WTC11 (cell line): ENCODE measurements at regions of chr6 and their contacts with region 1.

Region 1: DNA sequence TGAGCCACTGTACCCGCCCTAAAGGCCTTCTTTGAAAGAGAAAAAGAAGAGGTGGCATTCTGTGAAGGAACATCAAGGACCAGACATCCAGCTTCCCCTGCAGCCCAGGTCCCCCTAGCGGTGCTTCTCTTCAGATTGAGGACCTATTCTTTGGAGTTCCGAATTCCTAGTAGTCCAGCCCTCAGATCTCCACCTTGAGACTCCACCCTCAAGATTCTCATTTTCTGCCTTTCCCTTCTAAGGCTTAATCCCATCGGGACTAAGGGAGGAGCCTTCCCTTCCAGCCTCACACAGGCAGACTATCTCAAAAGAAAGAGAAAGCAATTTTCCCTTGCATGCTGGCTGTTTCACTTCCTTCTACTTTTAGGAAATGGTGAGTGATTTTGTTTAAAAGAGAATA is 32.5 kb downstream of the MUC22 start:
- DNase-seq: peak; percentile 72
- ATAC-seq: peak; percentile 94
- H3K4me3 Mint-ChIP-seq: no peak overlapping the region
- H3K27ac Mint-ChIP-seq: no peak overlapping the region
- H3K4me1 Mint-ChIP-seq: no peaks in the 10 kb centered on the region; the same call in 1 of the 2 replicates
- H3K27me3 Mint-ChIP-seq: no peaks in the 10 kb centered on the region
- CTCF ChIP-seq: peak; percentile 54

Region 2: GRCh38 chr6:30981942-30982772 is 60.6 kb before region 1 on chr6:
- CTCF ChIA-PET with region 1: interaction called, 17 read pairs
- POLR2A ChIA-PET with region 1: no interaction called
- DNase-seq: peak; percentile 67
- ATAC-seq: peak; percentile 99
- H3K4me3 Mint-ChIP-seq: peak overlapping the region; percentile 57
- H3K27ac Mint-ChIP-seq: peak overlapping the region; percentile 92
- H3K4me1 Mint-ChIP-seq: peaks cover 21% of the 10 kb centered on the region
- H3K27me3 Mint-ChIP-seq: no peaks in the 10 kb centered on the region; the same call in none of the 2 replicates
- CTCF ChIP-seq: no peak

Region 3: GRCh38 chr6:31007694-31008093 is 35.1 kb before region 1 on chr6:
- CTCF ChIA-PET with region 1: interaction called, 10 read pairs
- POLR2A ChIA-PET with region 1: no interaction called
- DNase-seq: no peak
- ATAC-seq: no peak
- H3K4me3 Mint-ChIP-seq: no peak overlapping the region
- H3K27ac Mint-ChIP-seq: no peak overlapping the region
- H3K4me1 Mint-ChIP-seq: no peaks in the 10 kb centered on the region
- H3K27me3 Mint-ChIP-seq: no peaks in the 10 kb centered on the region
- CTCF ChIP-seq: no peak

Region 4: DNA sequence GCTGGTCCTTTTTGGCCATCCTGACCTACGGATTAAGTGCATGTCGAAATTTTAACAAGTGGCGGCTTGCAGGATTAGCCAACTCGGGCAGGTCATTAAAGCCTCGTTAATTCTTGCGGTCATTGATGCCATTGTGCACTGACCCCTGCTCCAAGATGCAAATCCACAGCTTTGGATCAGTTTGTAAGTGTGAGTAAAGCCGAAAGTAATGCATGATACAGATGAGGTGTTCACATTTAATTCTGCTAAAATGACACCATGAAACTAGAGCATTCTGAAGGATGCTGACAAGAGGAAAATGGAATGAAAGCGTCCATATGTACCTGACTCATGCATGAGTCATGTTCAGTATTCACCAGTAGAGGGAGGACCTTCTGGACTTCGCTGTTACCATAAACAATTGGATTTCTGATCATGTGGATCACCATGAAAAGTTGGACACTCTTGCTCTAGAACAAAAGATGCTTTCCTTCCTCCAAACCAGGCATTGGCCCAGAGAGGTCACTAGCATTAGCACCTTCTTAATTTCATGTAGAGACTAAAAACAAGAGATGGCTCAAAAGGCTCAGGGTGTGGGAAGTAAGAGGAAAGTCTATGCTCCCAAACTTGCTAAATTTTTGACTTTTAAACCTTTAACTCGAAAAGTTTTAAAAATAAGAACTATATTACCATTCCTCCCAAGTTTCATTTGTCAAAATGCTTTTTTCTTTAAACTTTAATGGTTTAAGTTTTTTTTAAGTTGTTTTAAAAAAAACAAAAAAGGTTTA is 15.5 kb after region 1 on chr6:
- CTCF ChIA-PET with region 1: interaction called, 13 read pairs
- POLR2A ChIA-PET with region 1: no interaction called
- DNase-seq: no peak
- ATAC-seq: no peak
- H3K4me3 Mint-ChIP-seq: no peak overlapping the region
- H3K27ac Mint-ChIP-seq: no peak overlapping the region
- H3K4me1 Mint-ChIP-seq: peaks cover 12% of the 10 kb centered on the region
- H3K27me3 Mint-ChIP-seq: peaks cover 3% of the 10 kb centered on the region; the same call in 1 of the 2 replicates
- CTCF ChIP-seq: no peak

Region 5: GRCh38 chr6:31094389-31094881 is 51.6 kb after region 1 on chr6:
- CTCF ChIA-PET with region 1: no interaction called
- POLR2A ChIA-PET with region 1: no interaction called
- DNase-seq: no peak
- ATAC-seq: no peak
- H3K4me3 Mint-ChIP-seq: no peak overlapping the region
- H3K27ac Mint-ChIP-seq: no peak overlapping the region
- H3K4me1 Mint-ChIP-seq: peaks cover 19% of the 10 kb centered on the region
- H3K27me3 Mint-ChIP-seq: no peaks in the 10 kb centered on the region
- CTCF ChIP-seq: no peak